ENCODE measurements at regions of chr5 and their contacts with region 1.

Region 1: GRCh38 chr5:67202828-67203227 is 6.2 kb upstream of the CD180 start:
- DNase-seq: peak; percentile 35
- H3K4me3 Mint-ChIP-seq: no peak overlapping the region
- H3K27ac Mint-ChIP-seq: peak overlapping the region; percentile 69
- H3K4me1 Mint-ChIP-seq: peaks cover 82% of the 10 kb centered on the region
- H3K27me3 Mint-ChIP-seq: no peaks in the 10 kb centered on the region

Region 2: GRCh38 chr5:67188274-67189078 is 14.4 kb before region 1 on chr5:
- CTCF ChIA-PET with region 1: no interaction called
- intact Hi-C with region 1: loop called (anchors 2 kb)
- DNase-seq: no peak
- H3K4me3 Mint-ChIP-seq: no peak overlapping the region
- H3K27ac Mint-ChIP-seq: peak overlapping the region; percentile 16
- H3K4me1 Mint-ChIP-seq: peaks cover 31% of the 10 kb centered on the region
- H3K27me3 Mint-ChIP-seq: no peaks in the 10 kb centered on the region

Region 3: GRCh38 chr5:67416133-67416937 is 213.5 kb after region 1 on chr5:
- CTCF ChIA-PET with region 1: no interaction called
- intact Hi-C with region 1: no loop called
- DNase-seq: peak; percentile 52
- H3K4me3 Mint-ChIP-seq: no peak overlapping the region
- H3K27ac Mint-ChIP-seq: peak overlapping the region; percentile 53
- H3K4me1 Mint-ChIP-seq: peaks cover 16% of the 10 kb centered on the region
- H3K27me3 Mint-ChIP-seq: no peaks in the 10 kb centered on the region

Measured in activated naive CD4-positive, alpha-beta T cell treated with anti-CD3 and anti-CD28 coated beads for 36 hours (primary cell).